Activated CD4-positive, alpha-beta T cell treated with anti-CD3 and anti-CD28 coated beads, Interleukin-2, amount 10 ng/mL, durations not matched to agents 7 days and 5 days (primary cell): ENCODE measurements at regions of chr19 and their contacts with region 1.

Region 1: GRCh38 chr19:7799640-7800355 is 30.2 kb upstream of the EVI5L start:
- DNase-seq: peak; percentile 62
- H3K4me3 Mint-ChIP-seq: no peak overlapping the region
- H3K27ac Mint-ChIP-seq: peak overlapping the region; percentile 36
- H3K4me1 Mint-ChIP-seq: peaks cover 3% of the 10 kb centered on the region
- H3K27me3 Mint-ChIP-seq: peaks cover 41% of the 10 kb centered on the region

Region 2: DNA sequence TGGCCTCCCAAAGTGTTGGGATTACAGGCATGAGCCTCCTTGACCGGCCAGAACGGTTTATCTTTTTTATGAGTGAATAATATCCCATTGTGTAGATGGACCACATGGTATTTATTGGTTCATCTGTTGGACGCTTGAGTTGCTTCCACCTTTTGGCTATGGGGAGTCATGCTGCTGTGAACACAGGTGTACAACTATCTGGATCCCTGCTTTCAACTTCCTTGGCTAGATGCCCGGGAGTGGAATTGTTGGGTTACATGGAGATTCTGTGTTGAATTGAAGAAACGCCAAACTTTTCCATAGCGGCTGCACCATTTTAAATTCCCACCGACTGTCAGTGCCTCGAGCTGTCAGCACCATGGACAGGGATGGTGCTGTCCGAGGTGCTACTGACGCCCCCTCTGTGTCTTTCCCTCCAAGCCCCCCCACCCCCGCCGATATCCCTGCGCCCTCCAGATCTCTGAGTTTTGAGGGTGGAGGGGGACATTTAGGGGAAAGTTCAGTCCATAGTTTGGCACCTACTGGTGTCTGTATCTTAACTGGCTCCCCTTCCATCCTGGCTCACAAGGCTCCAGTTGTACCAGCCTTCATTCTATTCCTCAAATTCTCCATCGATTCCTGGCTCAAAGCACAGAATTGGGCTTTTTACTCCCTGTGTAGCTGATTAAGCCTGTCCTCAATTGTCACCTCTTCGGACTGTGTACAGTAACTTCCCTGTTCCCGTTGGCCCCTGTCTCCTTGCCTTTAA is 237.0 kb before region 1 on chr19:
- CTCF ChIA-PET with region 1: interaction called, 13 read pairs
- POLR2A ChIA-PET with region 1: no interaction called
- DNase-seq: no peak
- H3K4me3 Mint-ChIP-seq: no peak overlapping the region
- H3K27ac Mint-ChIP-seq: no peak overlapping the region
- H3K4me1 Mint-ChIP-seq: peaks cover 4% of the 10 kb centered on the region
- H3K27me3 Mint-ChIP-seq: no peaks in the 10 kb centered on the region

Region 3: GRCh38 chr19:7772752-7773291 is 27.0 kb before region 1 on chr19:
- CTCF ChIA-PET with region 1: no interaction called
- POLR2A ChIA-PET with region 1: no interaction called
- DNase-seq: no peak
- H3K4me3 Mint-ChIP-seq: no peak overlapping the region
- H3K27ac Mint-ChIP-seq: no peak overlapping the region
- H3K4me1 Mint-ChIP-seq: peaks cover 14% of the 10 kb centered on the region
- H3K27me3 Mint-ChIP-seq: peaks cover 16% of the 10 kb centered on the region

Region 4: DNA sequence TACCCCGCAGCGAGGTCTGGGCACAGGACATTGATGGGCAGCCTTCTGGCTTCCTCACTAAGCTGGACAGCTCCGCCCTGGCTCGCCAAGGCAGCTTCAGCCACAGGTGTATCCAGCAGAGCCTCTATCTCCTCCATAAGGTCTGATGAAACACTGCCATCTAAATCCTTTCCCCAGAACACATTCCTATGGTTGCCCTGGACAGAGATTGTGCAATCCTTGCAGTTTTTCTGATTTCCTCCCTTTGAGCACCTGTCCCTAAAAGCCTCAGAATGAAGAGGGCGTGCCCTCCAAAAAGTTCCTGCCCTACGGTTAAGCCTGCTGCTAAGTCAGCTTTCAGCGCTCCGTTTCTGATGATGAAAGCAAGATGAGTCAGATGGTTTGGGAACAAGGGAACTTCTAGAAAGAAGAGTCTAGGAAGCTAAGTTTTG is 15.8 kb before region 1 on chr19:
- CTCF ChIA-PET with region 1: no interaction called
- POLR2A ChIA-PET with region 1: no interaction called
- DNase-seq: no peak
- H3K4me3 Mint-ChIP-seq: no peak overlapping the region
- H3K27ac Mint-ChIP-seq: no peak overlapping the region
- H3K4me1 Mint-ChIP-seq: no peaks in the 10 kb centered on the region
- H3K27me3 Mint-ChIP-seq: peaks cover 32% of the 10 kb centered on the region